ENCODE measurements at regions of chr10 and their contacts with region 1.

Region 1: GRCh38 chr10:61987951-61988379 is 86.5 kb downstream of the ARID5B start:
- DNase-seq: peak; percentile 62
- ATAC-seq: peak; percentile 95
- H3K4me3 Mint-ChIP-seq: peak overlapping the region; percentile 58
- H3K27ac Mint-ChIP-seq: peak overlapping the region; percentile 99
- H3K4me1 Mint-ChIP-seq: peaks cover 80% of the 10 kb centered on the region
- H3K27me3 Mint-ChIP-seq: no peaks in the 10 kb centered on the region
- CTCF ChIP-seq: no peak

Region 2: GRCh38 chr10:61937631-61938351 is 50.2 kb before region 1 on chr10:
- CTCF ChIA-PET with region 1: interaction called, 3 read pairs
- POLR2A ChIA-PET with region 1: interaction called, 13 read pairs
- intact Hi-C with region 1: loop called (anchors 2 kb)
- DNase-seq: no peak
- ATAC-seq: peak; percentile 41
- H3K4me3 Mint-ChIP-seq: peak overlapping the region; percentile 9
- H3K27ac Mint-ChIP-seq: peak overlapping the region; percentile 92
- H3K4me1 Mint-ChIP-seq: peaks cover 81% of the 10 kb centered on the region
- H3K27me3 Mint-ChIP-seq: no peaks in the 10 kb centered on the region
- CTCF ChIP-seq: no peak

Region 3: GRCh38 chr10:61943674-61944410 is 44.1 kb before region 1 on chr10:
- CTCF ChIA-PET with region 1: interaction called, 4 read pairs
- POLR2A ChIA-PET with region 1: interaction called, 13 read pairs
- intact Hi-C with region 1: loop called (anchors 2 kb)
- DNase-seq: peak; percentile 58
- ATAC-seq: peak; percentile 77
- H3K4me3 Mint-ChIP-seq: peak overlapping the region; percentile 70
- H3K27ac Mint-ChIP-seq: peak overlapping the region; percentile 98
- H3K4me1 Mint-ChIP-seq: peaks cover 64% of the 10 kb centered on the region
- H3K27me3 Mint-ChIP-seq: no peaks in the 10 kb centered on the region
- CTCF ChIP-seq: no peak